AG04450 (cell line): ENCODE measurements at regions of chr2 and their contacts with region 1.

Region 1: DNA sequence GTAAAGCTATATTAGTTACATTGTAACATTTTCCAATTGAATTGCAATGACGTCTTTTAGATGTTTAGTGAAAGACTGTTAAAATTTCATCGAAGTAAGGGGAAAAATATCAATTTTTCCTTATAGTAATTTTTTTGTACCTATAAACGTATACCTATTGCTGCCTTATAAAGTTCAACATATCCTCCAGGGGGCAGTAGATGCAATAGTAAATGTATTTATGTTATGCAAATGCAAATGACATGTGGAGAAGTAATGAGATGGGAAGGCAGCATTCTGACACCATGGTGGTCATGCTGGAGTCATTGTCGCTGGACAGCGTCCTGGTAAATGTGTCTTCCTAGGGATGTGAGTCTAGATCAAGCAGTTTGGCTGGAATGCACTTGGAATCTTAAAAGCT is 38.7 kb downstream of the MSTN start:
- DNase-seq: peak; percentile 2
- H3K4me3 ChIP-seq: no peak overlapping the region
- H3K27ac ChIP-seq: no peak overlapping the region
- H3K27me3 ChIP-seq: peaks cover 7% of the 10 kb centered on the region
- CTCF ChIP-seq: peak; percentile 65

Region 2: DNA sequence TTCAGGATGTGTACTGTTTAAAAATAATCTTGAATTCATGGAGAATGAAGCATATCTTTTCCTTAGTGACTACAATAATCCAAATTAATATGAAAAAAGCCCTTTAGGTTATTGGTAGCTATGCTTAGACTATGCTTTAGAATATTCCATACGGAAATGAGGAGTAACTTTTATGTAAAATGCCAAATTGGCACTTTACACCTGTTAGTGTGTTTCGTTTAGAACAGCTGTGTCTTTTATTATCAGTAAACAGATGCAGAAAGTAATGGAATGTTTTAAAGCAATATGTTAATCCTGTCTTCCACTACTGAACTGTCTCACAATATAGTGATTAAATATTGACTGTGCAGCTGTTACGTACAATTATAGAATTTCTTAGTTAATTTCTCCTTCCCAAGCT is 110.0 kb before region 1 on chr2:
- CTCF ChIA-PET with region 1: no interaction called
- POLR2A ChIA-PET with region 1: no interaction called
- DNase-seq: no peak
- H3K4me3 ChIP-seq: no peak overlapping the region
- H3K27ac ChIP-seq: no peak overlapping the region
- H3K27me3 ChIP-seq: no peaks in the 10 kb centered on the region
- CTCF ChIP-seq: no peak

Region 3: DNA sequence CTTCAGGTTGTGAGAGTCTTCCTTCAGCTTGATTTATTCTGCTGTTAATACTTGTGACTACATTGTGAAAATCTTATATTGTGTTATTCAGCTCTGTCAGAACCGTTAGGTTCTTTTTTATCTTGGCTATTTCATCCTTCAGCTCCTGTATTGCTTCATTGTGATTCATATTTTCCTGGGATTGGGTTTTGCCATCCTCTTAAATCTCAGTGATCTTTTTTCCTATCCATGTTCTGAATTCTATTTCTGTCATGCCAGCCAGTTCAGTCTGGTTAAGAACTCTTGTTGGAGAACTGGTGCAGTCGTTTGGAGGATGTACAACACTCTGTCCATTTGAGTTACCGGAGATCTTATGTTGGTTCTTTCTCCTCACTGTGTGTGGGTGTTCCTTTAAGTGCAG is 19.6 kb after region 1 on chr2:
- CTCF ChIA-PET with region 1: interaction called, 11 read pairs
- POLR2A ChIA-PET with region 1: no interaction called
- DNase-seq: no peak
- H3K4me3 ChIP-seq: no peak overlapping the region
- H3K27ac ChIP-seq: no peak overlapping the region
- H3K27me3 ChIP-seq: no peaks in the 10 kb centered on the region
- CTCF ChIP-seq: no peak

Region 4: GRCh38 chr2:190069936-190070696 is 46.3 kb after region 1 on chr2:
- CTCF ChIA-PET with region 1: interaction called, 15 read pairs
- POLR2A ChIA-PET with region 1: no interaction called
- DNase-seq: peak; percentile 43
- H3K4me3 ChIP-seq: no peak overlapping the region
- H3K27ac ChIP-seq: no peak overlapping the region
- H3K27me3 ChIP-seq: no peaks in the 10 kb centered on the region
- CTCF ChIP-seq: peak; percentile 74

Region 5: DNA sequence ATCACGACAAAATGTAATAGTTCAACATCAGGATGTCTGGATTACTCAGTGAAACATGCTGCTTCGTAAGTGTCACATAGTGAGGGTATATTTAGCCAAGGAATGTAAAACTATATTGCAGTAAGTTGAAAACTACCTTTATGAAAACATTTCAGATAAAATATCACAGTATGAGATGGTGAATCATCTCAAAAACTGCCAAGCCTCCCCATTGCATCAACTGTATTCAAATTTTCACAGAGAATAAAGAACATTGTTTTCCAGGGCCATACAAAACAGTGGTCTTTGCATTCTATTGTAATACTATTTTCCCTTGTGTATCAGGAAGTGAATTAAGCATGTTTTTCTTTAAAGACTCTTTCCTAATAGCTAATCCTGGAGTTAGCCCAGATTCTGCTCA is 86.3 kb after region 1 on chr2:
- CTCF ChIA-PET with region 1: no interaction called
- POLR2A ChIA-PET with region 1: no interaction called
- DNase-seq: no peak
- H3K4me3 ChIP-seq: no peak overlapping the region
- H3K27ac ChIP-seq: no peak overlapping the region
- H3K27me3 ChIP-seq: no peaks in the 10 kb centered on the region
- CTCF ChIP-seq: no peak